RWPE1 (cell line): ENCODE measurements at regions of chr18 and their contacts with region 1.

Region 1: DNA sequence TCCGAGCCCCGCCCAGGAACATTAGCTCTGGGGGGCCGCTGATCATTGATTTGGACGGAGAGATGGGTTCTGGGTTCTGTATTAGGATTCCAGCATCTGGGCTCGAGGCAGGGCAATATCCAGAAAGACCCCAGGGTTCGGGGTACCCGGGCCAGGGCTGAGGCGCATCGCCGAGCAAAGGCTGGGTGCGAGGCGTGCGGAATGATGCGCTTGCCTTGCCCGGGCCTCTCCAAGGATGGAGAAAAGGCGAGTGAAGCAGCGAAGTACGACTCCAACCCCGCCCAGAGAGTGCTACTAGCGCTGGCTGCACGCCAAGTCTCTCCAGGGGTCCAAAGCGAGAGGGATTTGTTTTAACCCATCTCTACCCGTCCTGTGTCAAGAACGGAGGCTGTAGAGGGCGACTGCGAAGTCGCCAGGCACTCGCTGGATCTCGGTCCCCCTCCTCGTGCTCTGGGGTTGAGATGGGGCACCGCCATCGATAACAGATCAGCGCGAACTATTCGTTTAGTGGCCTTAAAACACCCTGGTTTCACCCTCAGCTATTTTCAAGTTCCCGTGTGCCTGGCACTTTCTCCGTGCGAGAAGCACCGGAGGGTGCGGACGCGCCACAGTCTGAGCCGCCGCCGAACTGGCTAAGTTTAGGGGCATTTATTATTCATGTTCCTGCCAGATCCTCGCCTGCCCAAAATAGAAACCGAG is 1.9 kb downstream of the ADCYAP1 start:
- DNase-seq: no peak
- H3K27ac ChIP-seq: no peak overlapping the region
- CTCF ChIP-seq: no peak

Region 2: GRCh38 chr18:250688-251422 is 655.7 kb before region 1 on chr18:
- CTCF ChIA-PET with region 1: no interaction called
- POLR2A ChIA-PET with region 1: interaction called, 10 read pairs
- DNase-seq: no peak
- H3K27ac ChIP-seq: no peak overlapping the region
- CTCF ChIP-seq: no peak